PC-9 (cell line): ENCODE measurements at regions of chr2 and their contacts with region 1.

Region 1: GRCh38 chr2:144480285-144480684 is 39.6 kb downstream of the ZEB2 start:
- DNase-seq: peak; percentile 3 to 39
- H3K4me3 ChIP-seq: no peak overlapping the region
- H3K27ac ChIP-seq: no peak overlapping the region
- H3K4me1 ChIP-seq: peaks cover 20% of the 10 kb centered on the region
- H3K27me3 ChIP-seq: no peaks in the 10 kb centered on the region
- CTCF ChIP-seq: no peak

Region 2: GRCh38 chr2:144215701-144216675 is 264.3 kb before region 1 on chr2:
- CTCF ChIA-PET with region 1: no interaction called
- POLR2A ChIA-PET with region 1: no interaction called
- intact Hi-C with region 1: no loop called
- DNase-seq: no peak
- H3K4me3 ChIP-seq: no peak overlapping the region
- H3K27ac ChIP-seq: no peak overlapping the region
- H3K4me1 ChIP-seq: 0 out of 2 replicates have a peak, but pooled peaks cover 6% of the 10 kb centered on the region
- H3K27me3 ChIP-seq: no peaks in the 10 kb centered on the region
- CTCF ChIP-seq: no peak

Region 3: GRCh38 chr2:144931480-144931879 is 451.2 kb after region 1 on chr2:
- CTCF ChIA-PET with region 1: interaction called, 11 read pairs
- POLR2A ChIA-PET with region 1: no interaction called
- intact Hi-C with region 1: no loop called
- DNase-seq: no peak
- H3K4me3 ChIP-seq: no peak overlapping the region
- H3K27ac ChIP-seq: no peak overlapping the region
- H3K4me1 ChIP-seq: no peaks in the 10 kb centered on the region
- H3K27me3 ChIP-seq: no peaks in the 10 kb centered on the region
- CTCF ChIP-seq: no peak